RWPE1 (cell line): ENCODE measurements at regions of chr14 and their contacts with region 1.

Region 1: GRCh38 chr14:32254952-32255679 is 52.0 kb upstream of the RNU6-8 start:
- DNase-seq: peak; percentile 53
- H3K27ac ChIP-seq: peak overlapping the region; percentile 64
- CTCF ChIP-seq: peak; percentile 75

Region 2: DNA sequence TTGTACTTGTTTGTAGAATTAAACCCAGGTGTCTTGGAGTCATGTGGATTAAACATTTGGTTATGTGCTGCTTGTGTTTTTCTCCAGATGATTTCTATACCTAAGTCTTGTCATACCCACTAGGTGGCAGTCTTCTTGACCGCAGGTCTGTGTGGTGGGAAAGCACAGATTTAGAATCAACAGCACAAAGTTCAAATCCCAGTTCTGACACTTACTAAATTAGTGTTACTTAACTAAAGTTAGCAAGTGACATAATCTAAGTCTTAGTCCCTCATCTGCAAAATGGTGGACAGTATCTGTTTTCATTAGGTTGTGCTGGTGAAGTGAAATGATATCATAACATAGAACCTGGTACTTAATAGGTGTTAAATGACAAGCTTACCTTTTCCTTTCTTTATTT is 329.0 kb before region 1 on chr14:
- CTCF ChIA-PET with region 1: interaction called, 11 read pairs
- POLR2A ChIA-PET with region 1: no interaction called
- DNase-seq: no peak
- H3K27ac ChIP-seq: no peak overlapping the region
- CTCF ChIP-seq: peak; percentile 31

Region 3: DNA sequence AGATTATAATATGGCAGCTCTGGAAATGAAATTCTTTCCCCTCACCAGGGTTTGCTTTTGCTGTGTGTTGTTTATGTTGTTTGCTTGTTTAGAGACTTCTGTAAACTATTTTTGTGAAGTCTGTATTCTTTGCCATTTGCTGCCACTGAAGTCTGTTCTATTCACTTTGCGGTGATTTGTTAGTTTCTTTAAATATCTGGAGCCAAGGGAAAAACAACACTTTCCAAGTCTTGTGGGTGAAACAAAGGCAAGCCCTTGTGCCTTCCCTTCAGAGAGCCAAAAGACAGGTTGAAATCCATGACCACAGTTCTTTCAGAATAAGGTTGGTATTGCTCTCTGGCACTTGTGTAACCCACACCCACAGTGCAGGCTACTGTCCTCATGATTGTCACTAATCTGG is 112.8 kb before region 1 on chr14:
- CTCF ChIA-PET with region 1: no interaction called
- POLR2A ChIA-PET with region 1: no interaction called
- DNase-seq: no peak
- H3K27ac ChIP-seq: no peak overlapping the region
- CTCF ChIP-seq: no peak

Region 4: DNA sequence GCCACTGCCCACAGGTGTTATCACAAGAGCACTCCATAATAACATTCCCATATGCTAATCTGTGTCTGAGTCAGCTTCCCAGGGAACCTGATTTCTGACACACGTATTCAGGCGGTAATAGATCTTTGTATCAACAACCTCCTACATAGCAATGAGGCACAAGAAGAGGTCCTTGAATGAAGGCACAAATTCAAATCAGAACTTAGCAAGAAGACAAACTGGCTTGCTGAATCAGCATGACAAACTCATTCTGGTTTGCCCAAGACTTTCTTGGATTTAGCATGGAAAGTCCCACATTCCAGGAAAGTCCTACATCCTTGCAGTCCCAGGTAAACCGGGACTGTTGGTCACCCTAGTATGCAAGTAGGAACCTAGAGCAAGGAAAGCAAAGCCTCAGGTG is 87.2 kb before region 1 on chr14:
- CTCF ChIA-PET with region 1: interaction called, 10 read pairs
- POLR2A ChIA-PET with region 1: no interaction called
- DNase-seq: no peak
- H3K27ac ChIP-seq: no peak overlapping the region
- CTCF ChIP-seq: no peak

Region 5: GRCh38 chr14:32469388-32470160 is 214.5 kb after region 1 on chr14:
- CTCF ChIA-PET with region 1: interaction called, 11 read pairs
- POLR2A ChIA-PET with region 1: no interaction called
- DNase-seq: peak; percentile 20
- H3K27ac ChIP-seq: no peak overlapping the region
- CTCF ChIP-seq: peak; percentile 67